ENCODE measurements at regions of chr19 and their contacts with region 1.

Region 1: DNA sequence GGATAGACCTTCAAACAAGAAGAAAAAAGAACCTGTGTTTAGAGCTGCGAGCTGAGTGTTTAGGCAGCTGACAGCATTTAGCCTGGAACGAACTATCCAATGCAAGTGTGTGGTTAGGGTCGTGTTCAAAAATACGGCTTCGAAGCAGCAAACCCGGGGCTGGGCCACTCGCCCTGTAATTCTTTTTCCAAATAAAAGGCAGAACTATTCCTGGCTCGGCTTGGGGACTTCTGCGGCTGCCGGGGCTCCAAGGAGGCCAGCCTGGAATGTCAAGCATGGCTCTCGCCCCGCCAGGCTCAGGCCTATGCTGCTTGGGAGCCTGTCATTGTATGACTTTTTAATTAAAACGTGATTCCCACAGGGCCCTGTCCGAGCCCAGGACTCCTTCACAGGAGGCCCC is 51.7 kb upstream of the KLF2 start:
- DNase-seq: no peak
- H3K4me3 ChIP-seq: no peak overlapping the region
- H3K27ac ChIP-seq: no peak overlapping the region
- H3K4me1 ChIP-seq: no peaks in the 10 kb centered on the region
- H3K27me3 ChIP-seq: no peaks in the 10 kb centered on the region
- CTCF ChIP-seq: no peak

Region 2: DNA sequence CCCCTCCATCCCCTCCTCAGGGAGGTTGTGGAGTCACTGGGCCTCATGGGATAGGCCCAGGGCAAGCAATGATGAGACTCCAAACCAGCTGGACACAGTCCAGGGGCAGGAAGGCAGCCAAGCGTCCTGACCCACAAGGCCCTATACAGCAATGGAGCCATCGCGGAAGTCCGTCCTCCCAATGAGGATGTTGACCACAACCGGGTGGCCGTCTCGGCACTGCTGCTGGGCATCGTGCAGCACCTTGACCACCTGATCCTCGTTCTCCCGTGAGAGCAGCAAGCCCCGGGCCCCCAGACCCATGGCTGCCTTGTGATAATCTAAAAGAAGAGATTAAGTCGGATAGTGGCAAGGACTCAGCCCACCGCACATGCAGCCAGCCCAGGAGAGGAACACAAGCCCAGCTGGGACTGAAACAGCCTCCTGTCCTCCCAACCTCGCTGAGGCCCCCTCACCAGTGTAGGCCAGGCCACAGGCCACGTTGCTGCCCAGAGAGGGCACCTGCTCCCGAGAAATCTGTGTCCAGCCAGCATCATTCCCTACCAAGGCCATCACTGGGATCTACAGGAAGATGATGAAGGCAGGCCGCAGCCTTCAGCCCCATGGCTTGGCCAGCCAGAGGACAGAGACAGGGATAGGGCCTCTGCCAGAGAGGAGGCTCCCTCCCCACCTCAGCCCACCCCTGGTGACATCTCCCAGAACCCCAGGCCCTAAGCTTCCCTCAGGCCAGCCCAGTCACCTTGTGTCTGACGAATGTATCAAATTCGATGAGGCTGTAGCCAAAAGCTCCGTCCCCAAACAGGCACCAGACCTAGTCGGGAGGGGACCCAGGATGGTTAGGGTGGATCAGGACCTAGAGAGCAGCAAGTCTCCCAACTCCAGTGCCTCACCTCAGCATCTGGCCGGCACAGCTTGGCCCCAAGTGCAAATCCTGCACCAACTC is 1157.6 kb before region 1 on chr19:
- CTCF ChIA-PET with region 1: interaction called, 13 read pairs
- POLR2A ChIA-PET with region 1: no interaction called
- intact Hi-C with region 1: no loop called
- DNase-seq: no peak
- H3K4me3 ChIP-seq: no peak overlapping the region
- H3K27ac ChIP-seq: no peak overlapping the region
- H3K4me1 ChIP-seq: peaks cover 5% of the 10 kb centered on the region; the same call in 1 of the 2 replicates
- H3K27me3 ChIP-seq: no peaks in the 10 kb centered on the region
- CTCF ChIP-seq: no peak

Region 3: DNA sequence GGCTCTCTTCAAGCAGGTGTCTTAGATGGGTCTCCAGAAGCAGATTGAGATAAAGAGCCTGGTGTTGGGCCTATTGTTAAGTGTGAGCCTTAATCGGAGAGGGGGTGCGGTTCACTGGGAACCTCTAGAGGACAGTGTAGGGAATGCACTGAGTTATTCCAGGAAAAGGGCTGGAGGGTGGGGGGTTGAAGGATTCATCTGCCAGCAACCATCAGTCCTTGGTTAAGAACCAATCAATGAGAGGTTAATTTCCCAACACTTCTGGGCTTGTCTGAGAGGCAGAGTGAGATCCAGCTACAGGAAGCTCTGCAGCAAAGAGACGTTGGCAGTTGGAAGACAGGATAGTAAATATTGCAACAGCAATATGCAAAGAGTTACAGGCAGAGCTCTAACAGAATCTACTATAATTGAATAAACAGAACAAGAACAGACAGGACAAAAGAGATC is 403.8 kb before region 1 on chr19:
- CTCF ChIA-PET with region 1: no interaction called
- POLR2A ChIA-PET with region 1: interaction called, 16 read pairs
- intact Hi-C with region 1: no loop called
- DNase-seq: peak; percentile 58 to 81
- H3K4me3 ChIP-seq: no peak overlapping the region
- H3K27ac ChIP-seq: no peak overlapping the region
- H3K4me1 ChIP-seq: peaks cover 16% of the 10 kb centered on the region
- H3K27me3 ChIP-seq: no peaks in the 10 kb centered on the region
- CTCF ChIP-seq: peak; percentile 91

Region 4: DNA sequence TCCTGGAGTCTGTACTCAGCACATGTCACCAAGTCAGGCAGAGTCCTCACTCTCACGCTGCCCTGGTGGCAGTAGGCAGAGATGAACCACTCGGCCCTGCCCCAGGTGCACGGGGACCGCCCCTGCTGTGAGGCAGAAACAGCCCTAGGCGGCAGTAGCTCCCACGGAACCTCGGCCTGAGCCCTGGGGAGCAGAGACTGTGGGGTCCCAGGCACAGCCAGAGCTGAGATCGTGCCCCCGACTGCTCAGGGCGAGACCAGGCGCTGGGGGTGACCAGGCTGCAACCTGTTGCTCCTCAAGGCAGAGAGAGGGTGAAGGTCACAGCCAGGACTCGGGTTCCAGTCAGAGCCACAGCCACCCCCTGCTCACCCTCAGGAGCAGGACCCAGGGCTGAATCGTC is 40.4 kb before region 1 on chr19:
- CTCF ChIA-PET with region 1: no interaction called
- POLR2A ChIA-PET with region 1: no interaction called
- intact Hi-C with region 1: no loop called
- DNase-seq: no peak
- H3K4me3 ChIP-seq: no peak overlapping the region
- H3K27ac ChIP-seq: no peak overlapping the region
- H3K4me1 ChIP-seq: no peaks in the 10 kb centered on the region
- H3K27me3 ChIP-seq: no peaks in the 10 kb centered on the region
- CTCF ChIP-seq: no peak

Region 5: GRCh38 chr19:16285769-16286498 is 13.0 kb after region 1 on chr19:
- CTCF ChIA-PET with region 1: no interaction called
- POLR2A ChIA-PET with region 1: no interaction called
- intact Hi-C with region 1: no loop called
- DNase-seq: no peak
- H3K4me3 ChIP-seq: no peak overlapping the region
- H3K27ac ChIP-seq: no peak overlapping the region
- H3K4me1 ChIP-seq: 0 out of 2 replicates have a peak, but pooled peaks cover 5% of the 10 kb centered on the region
- H3K27me3 ChIP-seq: peaks cover 27% of the 10 kb centered on the region
- CTCF ChIP-seq: no peak